Right cardiac atrium (tissue), 5 donors: ENCODE measurements at regions of chr5 and their contacts with region 1.

Region 1: GRCh38 chr5:141402553-141403260 is at the start of gene PCDHGA9:
- DNase-seq: no peak
- ATAC-seq: no peak
- H3K4me3 ChIP-seq: peak within 1 kb of the TSS; percentile 40
- H3K27ac ChIP-seq: no peak within 1 kb of the TSS
- H3K4me1 ChIP-seq: no peaks in the 10 kb centered on the region
- H3K27me3 ChIP-seq: no peaks in the 10 kb centered on the region
- total RNA-seq, gene PCDHGA9: 3.7 to 5.4 (median 3.7) TPM

Region 2: GRCh38 chr5:141234109-141234667 is 168.5 kb before region 1 on chr5:
- intact Hi-C with region 1: loop called in 1 of 4 experiments (anchors 10 kb)
- DNase-seq: no peak
- ATAC-seq: no peak
- H3K4me3 ChIP-seq: peak overlapping the region; percentile 30
- H3K27ac ChIP-seq: no peak overlapping the region
- H3K4me1 ChIP-seq: no peaks in the 10 kb centered on the region
- H3K27me3 ChIP-seq: no peaks in the 10 kb centered on the region

Region 3: GRCh38 chr5:141570655-141571054 is 167.9 kb after region 1 on chr5:
- intact Hi-C with region 1: no loop called
- DNase-seq: no peak
- ATAC-seq: no peak
- H3K4me3 ChIP-seq: no peak overlapping the region
- H3K27ac ChIP-seq: no peak overlapping the region
- H3K4me1 ChIP-seq: no peaks in the 10 kb centered on the region
- H3K27me3 ChIP-seq: no peaks in the 10 kb centered on the region

Region 4: GRCh38 chr5:141713616-141714309 is 311.1 kb after region 1 on chr5:
- intact Hi-C with region 1: no loop called
- DNase-seq: no peak
- ATAC-seq: peak; percentile 61 to 91
- H3K4me3 ChIP-seq: no peak overlapping the region
- H3K27ac ChIP-seq: no peak overlapping the region
- H3K4me1 ChIP-seq: no peaks in the 10 kb centered on the region
- H3K27me3 ChIP-seq: no peaks in the 10 kb centered on the region